Activated CD4-positive, alpha-beta T cell treated with anti-CD3 and anti-CD28 coated beads, Interleukin-2, amount 10 ng/mL, durations not matched to agents 24 days and 14 days (primary cell): ENCODE measurements at regions of chr4 and their contacts with region 1.

Region 1: GRCh38 chr4:120977435-120977997 is 55.0 kb upstream of the PRDM5 start:
- DNase-seq: peak; percentile 63
- H3K4me3 Mint-ChIP-seq: no peak overlapping the region
- H3K27ac Mint-ChIP-seq: no peak overlapping the region
- H3K4me1 Mint-ChIP-seq: no peaks in the 10 kb centered on the region
- H3K27me3 Mint-ChIP-seq: peaks cover 6% of the 10 kb centered on the region

Region 2: GRCh38 chr4:120718979-120719566 is 258.4 kb before region 1 on chr4:
- intact Hi-C with region 1: loop called (anchors 1 kb)
- DNase-seq: peak; percentile 62
- H3K4me3 Mint-ChIP-seq: no peak overlapping the region
- H3K27ac Mint-ChIP-seq: no peak overlapping the region
- H3K4me1 Mint-ChIP-seq: no peaks in the 10 kb centered on the region
- H3K27me3 Mint-ChIP-seq: peaks cover 15% of the 10 kb centered on the region

Region 3: DNA sequence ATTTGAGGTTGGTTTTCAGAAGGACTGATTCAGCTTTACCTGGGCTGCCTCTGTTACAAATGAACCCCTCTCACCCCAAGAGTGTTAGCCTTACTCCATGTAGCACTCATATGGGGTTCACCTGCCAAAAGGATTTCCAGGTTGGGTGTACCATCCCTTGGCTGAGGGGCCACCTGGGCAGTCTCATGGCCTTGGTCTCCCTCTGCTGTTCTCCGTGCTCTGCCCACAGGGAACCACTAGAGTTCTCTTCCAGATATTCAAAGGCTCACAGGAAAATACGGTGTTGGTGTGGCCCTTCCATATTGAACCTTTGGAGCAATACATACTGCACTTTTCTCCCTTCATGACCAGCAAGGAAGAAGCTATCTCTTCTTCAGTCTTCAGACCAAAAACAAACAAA is 37.0 kb before region 1 on chr4:
- intact Hi-C with region 1: no loop called
- DNase-seq: no peak
- H3K4me3 Mint-ChIP-seq: no peak overlapping the region
- H3K27ac Mint-ChIP-seq: no peak overlapping the region
- H3K4me1 Mint-ChIP-seq: no peaks in the 10 kb centered on the region
- H3K27me3 Mint-ChIP-seq: peaks cover 15% of the 10 kb centered on the region